ENCODE measurements at regions of chr9 and their contacts with region 1.

Region 1: DNA sequence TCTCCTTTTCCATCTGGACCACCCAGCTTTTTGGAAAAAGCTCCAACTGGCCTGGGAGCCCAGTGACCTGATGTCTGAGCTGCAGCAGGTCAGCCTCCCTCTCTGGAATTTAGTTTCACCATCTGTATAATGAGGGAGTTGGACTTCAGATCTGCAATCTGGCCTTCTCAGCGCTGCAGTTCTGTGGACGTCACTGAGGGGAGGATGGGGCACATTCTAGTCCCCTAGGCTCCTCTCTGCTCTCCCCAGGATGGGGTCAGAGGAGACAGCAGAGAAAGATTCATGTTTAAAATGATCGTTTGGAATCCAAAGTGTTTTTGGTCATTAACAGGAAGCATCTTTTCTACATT is 10.2 kb downstream of the OR13J1 start:
- DNase-seq: no peak
- H3K4me3 ChIP-seq: no peak overlapping the region
- CTCF ChIP-seq: no peak

Region 2: DNA sequence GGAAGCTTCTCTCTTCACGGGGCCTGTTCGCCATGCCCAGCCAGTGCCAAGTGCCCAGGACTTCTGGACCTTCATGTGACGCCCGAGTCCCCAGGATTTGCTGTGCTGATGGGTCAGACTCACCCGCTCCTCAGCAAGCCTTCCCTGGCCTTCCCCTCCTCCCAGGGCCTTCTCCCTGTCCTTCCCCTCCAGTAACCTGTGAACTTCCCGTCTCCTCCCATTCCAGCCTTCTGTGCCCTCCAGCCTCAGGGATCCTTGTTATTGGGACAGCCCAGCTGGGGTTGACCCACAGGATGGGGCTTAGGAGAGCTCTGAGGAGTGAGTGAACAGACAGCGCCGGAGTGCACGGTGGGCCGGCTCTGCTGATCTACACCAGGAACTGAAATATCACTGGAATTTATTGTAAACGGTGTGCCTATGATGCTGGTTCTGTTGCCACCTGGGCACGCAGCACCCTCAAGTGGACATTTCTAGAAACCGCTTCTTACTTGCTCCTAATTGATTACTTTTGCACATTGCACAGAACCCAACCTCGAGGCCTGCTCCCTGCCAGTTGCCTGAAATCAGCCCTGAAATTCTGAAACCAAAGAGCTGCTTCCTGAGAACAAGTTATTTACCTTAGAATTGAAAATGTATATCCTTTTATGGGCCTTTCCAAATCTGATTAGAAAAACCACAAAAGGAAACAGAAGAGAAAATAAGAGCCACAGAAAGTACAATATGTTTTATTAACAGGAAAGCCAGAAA is 50.8 kb after region 1 on chr9:
- in situ Hi-C with region 1: loop called (anchors 5 kb)
- DNase-seq: no peak
- H3K4me3 ChIP-seq: no peak overlapping the region
- CTCF ChIP-seq: peak; percentile 67